HEK293 (cell line): ENCODE measurements at regions of chr2 and their contacts with region 1.

Region 1: DNA sequence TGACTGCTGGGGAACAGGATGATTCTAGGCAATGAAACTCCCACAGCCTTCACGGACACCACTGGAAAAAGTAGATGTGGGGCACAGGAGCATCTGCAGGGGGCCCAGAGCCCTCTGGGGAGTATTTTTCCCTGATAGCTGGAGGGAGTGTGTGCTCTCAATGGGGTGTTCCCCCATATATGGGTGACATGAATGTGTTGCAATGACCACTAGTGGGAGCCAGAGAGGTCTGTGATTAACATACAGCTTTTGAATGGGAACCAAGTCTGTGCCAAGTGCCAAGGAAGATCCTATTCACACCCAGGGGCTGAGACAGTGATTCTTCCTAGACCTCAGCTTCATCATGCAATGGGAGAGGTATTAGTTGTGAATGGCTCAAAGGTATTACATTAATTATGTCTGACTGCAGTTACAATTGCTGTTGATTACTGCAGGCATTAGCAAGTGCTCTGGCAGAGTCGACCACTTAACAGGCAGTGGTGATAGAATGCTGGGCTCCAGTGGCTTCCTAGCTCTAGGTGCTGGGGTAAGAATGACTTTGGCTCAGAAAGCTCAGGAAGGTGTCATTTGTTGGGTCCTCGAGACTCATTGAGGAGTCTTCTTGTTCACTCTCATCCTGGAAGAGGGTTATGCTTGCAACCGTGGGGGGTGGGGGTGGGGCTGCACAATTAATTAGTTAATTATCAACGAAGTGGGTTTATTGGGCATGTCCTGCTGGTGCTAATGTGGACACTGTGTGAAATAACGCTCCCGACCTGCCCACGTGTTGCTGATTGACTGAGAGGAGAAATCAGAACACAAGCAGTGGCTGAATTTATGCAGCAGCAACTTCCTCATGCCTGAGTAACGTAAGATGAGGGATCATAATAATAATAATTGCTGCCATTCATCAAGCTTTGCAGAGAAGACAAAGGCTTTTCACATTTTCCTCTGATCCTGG is 194.1 kb downstream of the CLIP4 start:
- H3K4me3 ChIP-seq: no peak overlapping the region
- H3K27ac ChIP-seq: no peak overlapping the region
- H3K4me1 ChIP-seq: no peaks in the 10 kb centered on the region
- CTCF ChIP-seq: peak; percentile 54

Region 2: DNA sequence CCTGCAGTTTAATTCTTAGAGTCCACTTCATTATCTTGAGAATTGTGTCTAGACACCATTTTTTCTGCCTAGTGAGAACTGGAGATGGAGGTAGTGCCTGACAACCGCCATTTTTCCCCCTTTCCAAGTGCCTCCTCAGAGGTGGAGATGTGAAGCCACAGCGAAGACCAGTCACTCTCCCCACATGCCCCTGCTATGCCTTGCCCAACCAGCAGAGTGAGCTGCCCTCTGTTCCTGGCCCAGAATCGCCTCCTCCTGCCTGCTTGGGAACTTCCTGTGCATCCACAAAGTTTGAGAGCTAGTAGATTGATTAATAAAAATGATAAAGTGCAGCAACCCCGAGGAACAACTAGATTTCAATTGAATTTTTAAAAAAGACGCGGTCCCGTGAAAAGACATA is 70.9 kb before region 1 on chr2:
- CTCF ChIA-PET with region 1: interaction called, 12 read pairs
- POLR2A ChIA-PET with region 1: no interaction called
- H3K4me3 ChIP-seq: no peak overlapping the region
- H3K27ac ChIP-seq: no peak overlapping the region
- H3K4me1 ChIP-seq: no peaks in the 10 kb centered on the region
- CTCF ChIP-seq: peak; percentile 31; the same call in 1 of the 2 replicates

Region 3: DNA sequence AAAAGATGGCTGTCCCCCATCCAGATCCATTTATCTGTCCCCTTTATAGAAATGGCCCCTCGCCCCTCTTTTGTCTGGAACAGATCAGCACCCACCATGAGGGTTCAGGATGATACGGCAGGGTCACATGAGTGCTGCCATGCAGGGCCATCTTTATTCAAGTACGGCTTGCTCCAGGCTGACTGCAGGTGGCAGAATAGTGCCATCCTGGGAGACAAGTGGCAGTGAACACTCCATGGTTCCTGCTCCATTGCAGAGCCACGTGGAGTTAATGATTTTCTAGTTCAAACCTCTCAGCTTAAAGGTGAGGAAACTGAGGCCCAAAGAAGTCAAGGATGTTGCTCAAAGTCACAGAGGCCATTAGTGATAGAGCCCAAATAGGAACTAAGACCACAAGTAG is 13.5 kb before region 1 on chr2:
- CTCF ChIA-PET with region 1: interaction called, 12 read pairs
- POLR2A ChIA-PET with region 1: no interaction called
- H3K4me3 ChIP-seq: no peak overlapping the region
- H3K27ac ChIP-seq: no peak overlapping the region
- H3K4me1 ChIP-seq: no peaks in the 10 kb centered on the region
- CTCF ChIP-seq: peak; percentile 34; the same call in 1 of the 2 replicates

Region 4: GRCh38 chr2:29325544-29325943 is 16.2 kb after region 1 on chr2:
- CTCF ChIA-PET with region 1: interaction called, 12 read pairs
- POLR2A ChIA-PET with region 1: no interaction called
- H3K4me3 ChIP-seq: no peak overlapping the region
- H3K27ac ChIP-seq: no peak overlapping the region
- H3K4me1 ChIP-seq: no peaks in the 10 kb centered on the region
- CTCF ChIP-seq: no peak

Region 5: DNA sequence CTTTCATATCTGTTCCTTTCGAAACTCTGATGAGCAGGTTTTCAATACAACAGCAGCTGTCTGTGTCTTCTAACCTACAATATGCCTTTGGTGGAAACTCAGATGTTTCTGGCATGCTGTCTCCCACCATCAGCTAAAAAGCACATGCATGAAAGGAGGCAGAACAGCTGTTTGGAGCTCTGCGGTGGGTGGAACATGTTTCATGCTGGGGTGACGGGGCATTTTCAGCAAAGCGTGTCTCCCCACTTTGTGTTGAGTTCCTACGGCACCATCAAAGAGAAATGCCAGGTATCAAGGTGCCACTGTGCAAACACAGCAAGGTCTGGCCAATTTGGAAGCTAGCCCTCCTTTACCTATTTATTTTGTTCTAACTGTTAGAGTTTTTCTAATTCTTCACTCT is 95.9 kb after region 1 on chr2:
- CTCF ChIA-PET with region 1: no interaction called
- POLR2A ChIA-PET with region 1: no interaction called
- H3K4me3 ChIP-seq: no peak overlapping the region
- H3K27ac ChIP-seq: no peak overlapping the region
- H3K4me1 ChIP-seq: no peaks in the 10 kb centered on the region
- CTCF ChIP-seq: no peak

Region 6: GRCh38 chr2:29706171-29706720 is 396.9 kb after region 1 on chr2:
- CTCF ChIA-PET with region 1: interaction called, 10 read pairs
- POLR2A ChIA-PET with region 1: no interaction called
- H3K4me3 ChIP-seq: no peak overlapping the region
- H3K27ac ChIP-seq: no peak overlapping the region
- H3K4me1 ChIP-seq: no peaks in the 10 kb centered on the region
- CTCF ChIP-seq: no peak